Cardiac septum (tissue), 1 donor: ENCODE measurements at regions of chr18 and their contacts with region 1.

Region 1: GRCh38 chr18:23503038-23503962 is at the start of gene RMC1:
- DNase-seq: peak; percentile 99
- total RNA-seq, gene RMC1: 18.1 TPM

Region 2: DNA sequence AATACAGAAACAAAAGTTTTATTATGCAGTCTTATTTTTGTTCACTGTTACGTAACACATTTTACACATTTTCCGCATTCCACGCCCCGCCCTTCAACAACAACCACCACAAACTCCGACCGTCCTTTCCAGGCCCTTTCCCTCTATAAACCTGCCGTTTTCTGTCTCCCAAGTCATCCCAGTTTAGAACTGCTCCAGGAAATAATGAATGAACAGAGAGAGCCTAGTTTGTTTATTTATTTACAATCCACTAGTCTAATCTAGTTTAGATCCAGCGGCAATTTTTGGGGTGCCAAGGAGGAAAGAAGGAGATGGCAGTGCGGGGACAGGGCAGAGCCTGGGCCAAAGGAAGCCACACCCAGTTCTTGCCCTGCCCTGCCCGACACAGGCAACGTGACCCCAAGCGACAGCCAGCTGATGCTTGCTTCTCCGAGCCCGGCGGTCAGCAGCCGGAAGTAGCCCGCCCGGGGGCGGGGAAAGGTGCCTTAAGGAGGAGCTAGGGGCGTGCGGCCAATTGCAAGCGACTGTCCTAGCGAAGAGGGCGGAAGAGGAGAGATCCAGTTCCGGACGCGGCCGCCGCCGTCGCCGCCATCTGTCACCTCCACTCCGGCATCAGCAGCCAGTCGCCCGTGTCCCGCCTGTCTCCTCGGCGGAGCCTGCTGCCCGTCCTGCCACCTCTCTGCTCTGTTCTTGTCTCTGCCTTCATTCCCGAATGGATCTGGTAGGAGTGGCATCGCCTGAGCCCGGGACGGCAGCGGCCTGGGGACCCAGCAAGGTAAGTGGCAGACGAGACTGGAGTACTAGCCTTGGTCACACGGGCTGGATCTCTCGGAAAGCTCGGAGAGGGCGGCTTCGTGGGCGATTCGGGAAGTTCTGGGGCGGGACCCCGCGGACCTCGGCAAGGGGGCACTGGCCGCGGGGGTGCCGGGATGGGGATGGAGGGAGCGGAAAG is 50.3 kb before region 1 on chr18 and contains the start of gene RIOK3:
- intact Hi-C with region 1: loop called (anchors 2 kb)
- DNase-seq: peak; percentile 100
- total RNA-seq, gene RIOK3: 68.4 TPM

Region 3: DNA sequence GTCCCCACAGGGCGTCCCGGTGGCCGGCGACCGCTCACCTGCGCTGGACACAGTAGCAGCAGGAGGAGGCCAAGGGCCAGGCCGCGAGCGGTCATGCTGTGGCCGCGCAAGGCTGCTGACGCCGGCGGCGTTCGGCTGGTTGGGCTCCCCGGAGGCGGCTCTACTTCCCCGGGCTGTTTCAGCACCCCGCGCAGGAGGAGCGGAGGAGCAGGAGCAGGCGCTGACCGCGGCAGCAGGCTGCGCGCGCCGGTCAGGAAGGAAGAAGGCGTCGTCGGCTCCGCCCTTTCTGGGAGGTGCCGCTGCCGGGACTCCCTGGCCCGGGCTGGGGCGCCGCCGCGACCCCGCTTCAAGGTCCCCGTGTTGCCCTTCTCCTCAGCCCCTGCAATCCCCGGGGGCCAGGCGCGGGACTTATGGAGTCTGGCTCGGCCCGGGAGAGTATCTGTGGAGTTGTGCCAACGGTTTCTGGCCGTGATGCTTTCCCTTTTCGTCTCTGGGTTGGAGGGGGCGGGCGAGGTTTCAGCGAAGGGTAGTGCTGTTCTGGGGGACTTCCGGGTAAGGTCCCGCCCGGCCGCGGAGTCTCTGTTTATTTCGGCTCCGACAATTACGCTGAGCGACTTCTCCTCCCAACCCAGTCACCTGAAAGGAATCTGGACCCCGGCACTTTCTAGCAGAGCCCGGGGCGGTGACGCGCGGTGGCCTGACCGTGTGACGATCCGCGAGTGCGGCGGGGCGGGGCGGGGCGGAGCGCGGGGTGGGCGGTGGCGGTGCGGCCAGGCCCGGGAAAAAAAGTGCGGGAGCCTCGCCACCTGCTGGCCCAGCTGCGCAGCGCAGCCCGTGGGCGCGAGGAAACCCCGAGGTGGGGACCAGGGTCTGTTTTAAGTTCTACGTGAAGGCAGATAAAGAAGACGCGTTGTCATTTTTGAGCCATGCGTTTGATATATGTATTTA is 83.2 kb after region 1 on chr18 and contains the start of gene NPC1:
- intact Hi-C with region 1: loop called (anchors 1 kb)
- DNase-seq: peak; percentile 97
- total RNA-seq, gene NPC1: 16.0 TPM

Region 4: DNA sequence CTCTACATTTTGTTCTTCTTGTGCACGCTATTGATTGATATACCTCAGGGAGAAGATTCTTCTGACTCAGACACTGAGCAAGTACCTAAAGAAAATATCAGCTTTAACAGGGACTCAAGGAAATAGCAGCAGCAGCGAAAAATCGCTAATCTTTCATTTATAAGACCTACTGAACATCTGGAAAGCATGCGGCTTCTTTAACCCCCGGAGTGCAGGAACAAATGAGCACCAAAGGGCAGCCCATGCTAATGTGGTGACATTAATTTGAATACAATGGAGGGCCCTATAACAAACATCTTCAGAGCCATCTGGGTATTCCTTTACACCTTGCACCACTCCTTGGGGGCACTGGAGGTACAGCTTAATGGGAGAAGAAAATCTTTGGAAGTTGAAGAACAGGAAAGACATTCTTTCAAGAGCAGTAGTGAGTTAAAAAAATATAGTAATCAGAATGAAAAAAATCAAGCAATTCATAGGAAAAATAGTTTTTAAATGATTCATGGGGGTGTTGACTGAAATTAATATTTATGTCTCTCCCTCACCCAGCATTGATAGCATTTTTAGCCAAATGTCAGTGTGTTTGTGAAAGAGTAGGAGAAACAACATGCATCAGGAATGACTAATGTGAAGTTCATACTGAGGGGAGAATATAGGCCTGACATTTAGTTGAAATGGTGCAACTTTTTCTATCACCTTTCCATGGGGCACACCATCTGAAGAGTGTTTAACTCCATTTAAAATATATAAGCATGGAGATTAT is 1238.8 kb after region 1 on chr18:
- intact Hi-C with region 1: no loop called
- DNase-seq: no peak